ENCODE measurements at regions of chr22 and their contacts with region 1.

Region 1: DNA sequence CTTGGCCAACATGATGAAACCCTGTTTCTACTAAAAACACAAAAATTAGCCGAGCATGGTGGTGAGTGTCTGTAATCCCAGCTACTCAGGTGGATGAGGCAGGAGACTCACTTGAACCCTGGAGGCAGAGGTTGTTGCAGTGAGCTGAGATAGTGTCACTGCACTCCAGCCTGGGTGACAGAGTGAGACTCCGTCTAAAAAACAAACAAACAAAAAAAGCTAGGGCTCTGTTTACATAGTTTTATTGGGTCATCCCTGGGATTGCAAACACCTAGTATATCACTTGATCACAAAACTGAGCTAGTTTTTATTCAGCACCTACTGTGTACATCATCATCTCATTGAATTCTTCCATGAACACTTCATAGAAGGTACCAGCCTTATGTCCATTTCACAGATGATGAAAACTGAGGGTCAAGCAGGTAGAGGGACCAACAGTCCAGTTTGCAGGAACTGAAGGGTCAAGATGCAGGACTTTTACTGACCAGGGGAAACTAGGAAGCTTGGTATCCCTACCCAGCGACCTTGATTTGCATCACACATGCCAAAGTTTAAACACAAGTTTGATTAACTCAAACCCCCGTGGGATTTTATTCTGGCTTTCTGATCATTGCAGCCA is 9.2 kb upstream of the MRTFA start:
- DNase-seq: no peak
- H3K4me3 Mint-ChIP-seq: no peak overlapping the region
- H3K27ac Mint-ChIP-seq: no peak overlapping the region
- H3K4me1 Mint-ChIP-seq: peaks cover 21% of the 10 kb centered on the region
- H3K27me3 Mint-ChIP-seq: peaks cover 3% of the 10 kb centered on the region

Region 2: GRCh38 chr22:40487663-40488249 is 157.9 kb before region 1 on chr22:
- CTCF ChIA-PET with region 1: interaction called, 20 read pairs
- POLR2A ChIA-PET with region 1: no interaction called
- DNase-seq: no peak
- H3K4me3 Mint-ChIP-seq: no peak overlapping the region
- H3K27ac Mint-ChIP-seq: no peak overlapping the region
- H3K4me1 Mint-ChIP-seq: peaks cover 21% of the 10 kb centered on the region
- H3K27me3 Mint-ChIP-seq: no peaks in the 10 kb centered on the region

Region 3: GRCh38 chr22:40519284-40519947 is 126.3 kb before region 1 on chr22:
- CTCF ChIA-PET with region 1: interaction called, 76 read pairs
- POLR2A ChIA-PET with region 1: interaction called, 5 read pairs
- DNase-seq: no peak
- H3K4me3 Mint-ChIP-seq: peak overlapping the region; percentile 47
- H3K27ac Mint-ChIP-seq: peak overlapping the region; percentile 57
- H3K4me1 Mint-ChIP-seq: peaks cover 28% of the 10 kb centered on the region
- H3K27me3 Mint-ChIP-seq: no peaks in the 10 kb centered on the region

Region 4: DNA sequence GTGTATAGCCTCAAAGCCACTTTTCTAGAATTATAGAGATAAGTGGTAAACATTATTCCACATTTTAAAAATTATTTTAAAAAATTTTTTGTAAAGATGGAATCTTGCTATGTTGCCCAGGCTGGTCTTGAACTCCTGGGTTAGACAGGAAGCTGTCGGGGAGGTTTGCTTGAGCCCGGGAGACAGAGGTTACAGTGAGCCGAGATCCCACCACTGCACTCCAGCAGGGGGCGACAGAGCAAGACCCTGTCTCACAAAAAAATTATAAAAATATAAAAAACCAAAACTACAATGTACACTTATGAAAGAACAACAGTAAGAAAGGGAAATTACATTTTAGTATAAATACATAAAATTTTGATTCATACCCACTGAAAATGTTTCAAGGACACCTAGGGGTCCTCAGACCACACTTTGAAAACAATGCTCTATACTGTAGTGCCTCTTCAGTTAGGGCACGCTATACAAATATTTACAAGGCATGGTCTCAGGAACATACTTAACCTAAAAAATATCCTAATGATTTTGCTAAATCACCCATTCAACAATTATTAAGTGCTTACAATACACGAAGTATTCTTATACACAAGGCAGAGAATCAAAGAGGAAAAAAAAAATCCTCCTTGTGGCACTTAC is 120.3 kb before region 1 on chr22:
- CTCF ChIA-PET with region 1: interaction called, 76 read pairs
- POLR2A ChIA-PET with region 1: interaction called, 5 read pairs
- DNase-seq: peak; percentile 73
- H3K4me3 Mint-ChIP-seq: no peak overlapping the region
- H3K27ac Mint-ChIP-seq: no peak overlapping the region
- H3K4me1 Mint-ChIP-seq: peaks cover 23% of the 10 kb centered on the region
- H3K27me3 Mint-ChIP-seq: no peaks in the 10 kb centered on the region

Region 5: DNA sequence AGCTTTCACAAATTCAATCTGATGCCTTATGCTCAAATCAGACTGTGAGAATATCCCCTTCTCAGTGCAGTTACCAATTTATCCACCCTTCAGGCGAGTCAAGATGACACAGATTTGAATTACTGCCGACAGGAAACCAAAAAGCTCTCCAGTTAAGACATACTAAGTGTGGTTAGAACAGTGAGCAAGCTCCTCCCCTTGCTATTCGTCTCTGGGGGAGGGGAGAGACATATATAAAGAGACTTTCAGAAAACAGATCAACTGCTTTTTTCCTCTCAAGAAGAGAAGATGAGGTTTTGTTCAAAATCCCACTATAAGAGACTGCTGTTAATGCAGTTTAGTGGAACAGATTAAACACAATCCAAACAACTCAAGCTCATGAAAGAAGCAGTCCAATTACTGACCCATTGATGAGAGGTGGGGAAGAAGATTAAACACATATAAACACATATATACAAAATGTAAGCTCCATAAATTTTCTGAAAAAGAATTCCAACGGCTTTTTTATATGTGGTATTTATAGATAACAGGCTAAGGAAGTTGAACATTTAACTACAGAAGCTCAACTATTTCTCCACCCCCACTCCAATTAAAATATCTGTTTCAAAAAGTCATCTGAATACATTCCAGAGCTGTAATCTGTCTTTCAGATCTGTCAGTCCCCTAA is 111.8 kb before region 1 on chr22:
- CTCF ChIA-PET with region 1: interaction called, 38 read pairs
- POLR2A ChIA-PET with region 1: interaction called, 8 read pairs
- DNase-seq: peak; percentile 65
- H3K4me3 Mint-ChIP-seq: peak overlapping the region; percentile 73
- H3K27ac Mint-ChIP-seq: peak overlapping the region; percentile 73
- H3K4me1 Mint-ChIP-seq: peaks cover 57% of the 10 kb centered on the region
- H3K27me3 Mint-ChIP-seq: no peaks in the 10 kb centered on the region

Region 6: DNA sequence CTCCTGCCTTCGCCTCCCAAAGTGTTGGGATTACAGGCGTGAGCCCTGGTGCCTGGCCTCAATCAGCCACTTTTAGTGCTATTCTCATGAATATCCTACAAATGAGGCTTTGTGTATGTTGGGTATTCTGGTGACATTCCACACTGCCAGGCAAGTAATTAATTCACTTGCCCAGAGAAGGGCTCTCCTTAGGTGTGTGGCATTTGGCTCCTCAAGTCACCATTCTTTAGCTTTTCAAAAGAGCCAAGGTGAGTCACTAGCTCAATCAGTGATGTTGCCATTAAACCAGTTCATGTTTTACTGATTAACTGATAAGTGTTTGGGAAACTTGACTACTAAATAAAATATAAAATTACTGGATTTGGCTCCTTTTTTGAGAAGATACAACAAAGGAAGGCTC is 121.3 kb after region 1 on chr22:
- CTCF ChIA-PET with region 1: no interaction called
- POLR2A ChIA-PET with region 1: no interaction called
- DNase-seq: no peak
- H3K4me3 Mint-ChIP-seq: no peak overlapping the region
- H3K27ac Mint-ChIP-seq: no peak overlapping the region
- H3K4me1 Mint-ChIP-seq: peaks cover 13% of the 10 kb centered on the region
- H3K27me3 Mint-ChIP-seq: no peaks in the 10 kb centered on the region